ENCODE measurements at regions of chr4 and their contacts with region 1.

Region 1: DNA sequence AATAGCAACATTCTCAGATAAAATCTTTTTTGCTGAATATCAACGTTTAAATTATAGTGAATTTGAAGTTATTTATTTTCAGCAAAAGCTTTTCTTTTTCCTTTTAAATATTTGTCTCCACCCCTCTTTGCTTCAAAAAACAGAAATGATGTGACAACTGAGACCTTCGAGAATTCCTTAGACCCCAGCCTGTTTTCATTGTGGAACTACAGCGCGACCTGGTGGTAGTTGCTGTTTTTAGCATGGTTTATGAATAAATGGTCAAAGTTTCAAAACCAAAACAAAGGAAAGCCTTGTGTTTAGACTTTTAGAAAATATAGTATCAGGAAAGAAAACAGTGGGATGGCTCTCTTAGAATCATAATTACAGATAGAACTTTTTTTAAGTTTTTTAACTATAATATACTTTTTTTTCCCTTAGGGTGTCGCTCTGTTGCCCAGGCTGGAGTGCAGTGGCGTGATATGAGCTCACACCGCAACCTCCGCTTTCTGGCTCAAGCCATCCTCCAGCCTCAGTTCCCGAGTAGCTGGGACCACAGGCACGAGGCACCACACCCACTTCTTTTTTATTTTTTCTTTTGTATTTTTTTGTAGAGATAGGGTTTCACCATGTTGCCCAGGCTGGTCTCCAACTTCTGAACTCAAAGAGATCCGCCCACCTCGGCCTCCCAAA is 26.8 kb upstream of the TMEM184C start:
- DNase-seq: no peak
- ATAC-seq: no peak
- H3K4me3 Mint-ChIP-seq: no peak overlapping the region
- H3K27ac Mint-ChIP-seq: no peak overlapping the region
- H3K4me1 Mint-ChIP-seq: no peaks in the 10 kb centered on the region
- H3K27me3 Mint-ChIP-seq: peaks cover 18% of the 10 kb centered on the region
- CTCF ChIP-seq: no peak

Region 2: GRCh38 chr4:147056940-147057610 is 533.3 kb before region 1 on chr4:
- CTCF ChIA-PET with region 1: no interaction called
- POLR2A ChIA-PET with region 1: no interaction called
- intact Hi-C with region 1: no loop called
- DNase-seq: no peak
- ATAC-seq: no peak
- H3K4me3 Mint-ChIP-seq: peak overlapping the region; percentile 83
- H3K27ac Mint-ChIP-seq: peak overlapping the region; percentile 85
- H3K4me1 Mint-ChIP-seq: peaks cover 25% of the 10 kb centered on the region
- H3K27me3 Mint-ChIP-seq: peaks cover 8% of the 10 kb centered on the region
- CTCF ChIP-seq: no peak

Region 3: DNA sequence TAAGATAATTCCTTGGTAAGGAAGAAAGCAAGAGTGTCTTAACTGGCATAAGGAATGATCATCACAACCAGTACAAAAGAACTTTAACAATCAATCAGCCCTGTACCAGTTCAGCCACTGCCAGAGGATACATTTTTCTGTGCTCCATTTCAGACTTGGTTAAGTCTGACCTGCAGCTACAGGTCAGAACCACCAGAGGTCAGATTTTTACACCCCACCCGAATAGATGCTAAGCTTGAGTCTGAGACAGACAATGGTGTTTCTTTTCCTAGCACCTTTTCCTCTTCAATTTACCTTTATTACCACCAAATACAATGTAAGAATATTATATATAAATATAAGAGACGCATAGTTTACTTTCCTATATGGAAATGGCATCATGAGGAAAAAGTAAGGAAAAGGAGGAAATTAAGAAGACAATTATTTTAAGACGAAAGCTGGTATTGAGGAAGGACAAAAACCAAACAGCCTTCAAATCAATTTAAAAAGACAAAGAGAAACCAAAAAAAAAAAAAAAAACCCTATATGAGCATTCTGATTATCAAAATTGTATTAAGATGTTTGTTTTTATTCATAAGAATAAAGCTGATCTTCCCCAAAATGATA is 429.4 kb before region 1 on chr4:
- CTCF ChIA-PET with region 1: interaction called, 4 read pairs
- POLR2A ChIA-PET with region 1: no interaction called
- intact Hi-C with region 1: loop called (anchors 2 kb)
- DNase-seq: no peak
- ATAC-seq: no peak
- H3K4me3 Mint-ChIP-seq: no peak overlapping the region
- H3K27ac Mint-ChIP-seq: no peak overlapping the region
- H3K4me1 Mint-ChIP-seq: no peaks in the 10 kb centered on the region
- H3K27me3 Mint-ChIP-seq: peaks cover 8% of the 10 kb centered on the region
- CTCF ChIP-seq: no peak

Region 4: DNA sequence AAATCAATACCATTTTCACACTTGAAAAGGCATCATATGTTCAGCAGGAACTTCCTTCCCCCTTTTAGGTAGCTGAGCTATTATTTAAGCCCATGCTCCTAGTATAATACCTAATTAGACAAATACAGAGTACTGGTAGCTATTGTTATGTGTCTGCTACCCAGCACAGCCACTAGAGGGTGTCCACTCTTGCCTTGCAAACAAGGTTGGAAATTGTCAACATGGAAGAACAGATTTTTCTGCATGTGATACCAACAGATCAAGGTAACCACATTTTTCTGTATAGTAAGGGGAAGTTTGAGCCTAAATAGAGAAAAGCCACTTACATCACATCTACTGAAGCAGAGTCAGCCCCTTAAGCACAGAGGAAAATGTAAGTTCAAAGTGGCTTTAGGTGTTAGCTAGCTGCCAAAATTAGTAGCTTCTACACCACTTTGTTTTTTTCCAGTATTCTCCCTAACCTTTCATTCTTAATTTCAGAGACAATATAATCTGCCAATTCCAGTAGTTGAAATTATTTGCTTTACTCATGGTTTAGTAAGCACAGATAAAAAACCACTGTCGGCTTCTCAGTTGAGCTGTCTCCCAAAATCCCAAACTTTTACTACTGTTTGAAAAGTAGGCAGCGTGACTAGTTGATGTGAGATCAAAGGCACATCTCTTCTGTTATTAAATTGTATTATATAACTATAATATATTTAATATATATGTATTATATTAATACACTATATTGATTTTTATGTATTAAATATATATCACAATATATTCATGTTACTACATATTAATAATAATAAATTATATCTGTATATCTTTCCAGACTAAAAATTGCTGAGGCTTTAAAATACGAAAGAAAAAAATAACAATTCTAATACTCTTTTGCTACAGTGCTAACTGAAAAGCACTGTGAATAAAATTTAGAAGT is 71.3 kb before region 1 on chr4:
- CTCF ChIA-PET with region 1: interaction called, 8 read pairs
- POLR2A ChIA-PET with region 1: no interaction called
- intact Hi-C with region 1: loop called (anchors 2 kb)
- DNase-seq: no peak
- ATAC-seq: no peak
- H3K4me3 Mint-ChIP-seq: no peak overlapping the region
- H3K27ac Mint-ChIP-seq: no peak overlapping the region
- H3K4me1 Mint-ChIP-seq: no peaks in the 10 kb centered on the region
- H3K27me3 Mint-ChIP-seq: peaks cover 4% of the 10 kb centered on the region
- CTCF ChIP-seq: no peak